Left lung (tissue), 14 donors: ENCODE measurements at regions of chr11 and their contacts with region 1.

Region 1: GRCh38 chr11:110376711-110377324 is 52.9 kb upstream of the FDX1 start:
- DNase-seq: peak in 3 of 4 donors; percentile 60 to 83 (median 70)
- ATAC-seq: peak; percentile 88
- H3K4me3 ChIP-seq: peak overlapping the region in 1 of 2 donors; percentile 1
- H3K27ac ChIP-seq: peak overlapping the region; percentile 66 to 73
- H3K4me1 ChIP-seq: peaks cover 0 to 47% of the 10 kb centered on the region in 2 donors
- H3K27me3 ChIP-seq: no peaks in the 10 kb centered on the region
- CTCF ChIP-seq: peak; percentile 77 to 80

Region 2: DNA sequence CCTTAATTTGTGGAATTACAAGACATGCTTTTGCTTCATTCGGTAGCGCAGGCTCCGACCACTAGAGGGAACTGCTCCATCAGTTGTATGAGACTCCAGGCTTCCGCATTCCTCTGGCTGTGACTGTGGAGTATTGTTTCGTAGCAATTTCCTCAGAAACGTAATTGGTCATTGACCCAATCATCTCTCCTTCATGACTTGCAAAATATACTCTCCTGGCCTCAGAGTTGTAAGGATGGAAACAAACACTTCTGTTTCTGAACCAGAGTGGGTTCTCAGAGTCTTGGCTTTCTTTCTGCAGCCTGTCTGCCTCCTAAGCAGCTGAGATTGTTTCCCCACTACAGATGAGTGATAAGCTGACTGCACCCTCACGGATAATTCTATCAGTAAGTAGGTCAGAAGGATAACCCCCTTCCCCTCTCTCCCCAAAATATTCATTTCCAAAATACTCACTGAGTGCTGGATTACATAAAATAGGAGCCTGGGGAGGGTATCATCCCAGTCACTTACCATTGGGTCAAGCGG is 430.4 kb before region 1 on chr11:
- intact Hi-C with region 1: loop called in 1 of 2 experiments (anchors 10 kb)
- DNase-seq: peak; percentile 61 to 89 (median 84)
- ATAC-seq: peak; percentile 100
- H3K4me3 ChIP-seq: peak overlapping the region; percentile 14 to 17
- H3K27ac ChIP-seq: peak overlapping the region; percentile 46 to 66
- H3K4me1 ChIP-seq: peaks cover 4 to 5% of the 10 kb centered on the region in 2 donors
- H3K27me3 ChIP-seq: no peaks in the 10 kb centered on the region
- CTCF ChIP-seq: peak; percentile 83 to 89

Region 3: GRCh38 chr11:110200241-110200640 is 176.6 kb before region 1 on chr11:
- intact Hi-C with region 1: loop called (anchors 5 to 10 kb)
- DNase-seq: no peak
- ATAC-seq: no peak
- H3K4me3 ChIP-seq: no peak overlapping the region
- H3K27ac ChIP-seq: no peak overlapping the region
- H3K4me1 ChIP-seq: peaks cover 0 to 4% of the 10 kb centered on the region in 2 donors
- H3K27me3 ChIP-seq: no peaks in the 10 kb centered on the region
- CTCF ChIP-seq: no peak

Region 4: GRCh38 chr11:110409174-110409573 is 32.4 kb after region 1 on chr11:
- intact Hi-C with region 1: no loop called
- DNase-seq: peak in 1 of 4 donors; percentile 34
- ATAC-seq: peak; percentile 75
- H3K4me3 ChIP-seq: no peak overlapping the region
- H3K27ac ChIP-seq: no peak overlapping the region
- H3K4me1 ChIP-seq: peaks cover 0 to 11% of the 10 kb centered on the region in 2 donors
- H3K27me3 ChIP-seq: no peaks in the 10 kb centered on the region
- CTCF ChIP-seq: no peak

Region 5: DNA sequence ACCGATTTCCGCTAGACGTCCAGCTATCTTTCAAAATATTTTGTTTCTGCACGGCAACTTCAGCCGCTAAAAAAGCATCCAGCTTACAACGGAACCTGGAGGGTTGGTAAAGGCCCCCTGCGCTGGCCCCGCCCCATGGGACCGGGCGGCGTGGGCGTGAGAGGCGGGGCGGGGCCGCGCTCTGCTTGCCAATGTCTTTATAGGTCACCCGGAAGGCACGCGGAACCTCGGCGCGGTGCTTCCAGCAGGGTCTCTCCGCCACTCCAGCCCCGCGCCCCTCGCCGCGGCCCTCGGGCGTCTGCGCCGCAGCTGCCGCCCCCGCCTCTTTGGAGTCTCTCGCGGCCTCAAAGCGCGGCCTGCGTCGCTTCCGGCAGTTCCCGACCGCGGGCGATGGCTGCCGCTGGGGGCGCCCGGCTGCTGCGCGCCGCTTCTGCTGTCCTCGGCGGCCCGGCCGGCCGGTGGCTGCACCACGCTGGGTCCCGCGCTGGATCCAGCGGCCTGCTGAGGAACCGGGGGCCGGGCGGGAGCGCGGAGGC is 53.0 kb after region 1 on chr11 and contains the start of gene FDX1:
- intact Hi-C with region 1: loop called in 1 of 2 experiments (anchors 10 kb)
- DNase-seq: peak; percentile 82 to 95 (median 90)
- ATAC-seq: peak; percentile 90
- H3K4me3 ChIP-seq: peak within 1 kb of the TSS; percentile 80
- H3K27ac ChIP-seq: peak within 1 kb of the TSS; percentile 87 to 90
- H3K4me1 ChIP-seq: peaks cover 14 to 29% of the 10 kb centered on the region in 2 donors
- H3K27me3 ChIP-seq: no peaks in the 10 kb centered on the region
- CTCF ChIP-seq: peak; percentile 53 to 60
- polyA plus RNA-seq, gene FDX1: 16.0 to 18.5 (median 16.6) TPM